ENCODE measurements at regions of chr9 and their contacts with region 1.

Region 1: GRCh38 chr9:77433675-77434445 is 214.3 kb downstream of the GNA14 start:
- DNase-seq: peak; percentile 76
- ATAC-seq: peak; percentile 93
- H3K4me3 ChIP-seq: no peak overlapping the region
- H3K27ac ChIP-seq: no peak overlapping the region
- H3K4me1 ChIP-seq: no peaks in the 10 kb centered on the region
- H3K27me3 ChIP-seq: no peaks in the 10 kb centered on the region
- CTCF ChIP-seq: peak; percentile 94

Region 2: DNA sequence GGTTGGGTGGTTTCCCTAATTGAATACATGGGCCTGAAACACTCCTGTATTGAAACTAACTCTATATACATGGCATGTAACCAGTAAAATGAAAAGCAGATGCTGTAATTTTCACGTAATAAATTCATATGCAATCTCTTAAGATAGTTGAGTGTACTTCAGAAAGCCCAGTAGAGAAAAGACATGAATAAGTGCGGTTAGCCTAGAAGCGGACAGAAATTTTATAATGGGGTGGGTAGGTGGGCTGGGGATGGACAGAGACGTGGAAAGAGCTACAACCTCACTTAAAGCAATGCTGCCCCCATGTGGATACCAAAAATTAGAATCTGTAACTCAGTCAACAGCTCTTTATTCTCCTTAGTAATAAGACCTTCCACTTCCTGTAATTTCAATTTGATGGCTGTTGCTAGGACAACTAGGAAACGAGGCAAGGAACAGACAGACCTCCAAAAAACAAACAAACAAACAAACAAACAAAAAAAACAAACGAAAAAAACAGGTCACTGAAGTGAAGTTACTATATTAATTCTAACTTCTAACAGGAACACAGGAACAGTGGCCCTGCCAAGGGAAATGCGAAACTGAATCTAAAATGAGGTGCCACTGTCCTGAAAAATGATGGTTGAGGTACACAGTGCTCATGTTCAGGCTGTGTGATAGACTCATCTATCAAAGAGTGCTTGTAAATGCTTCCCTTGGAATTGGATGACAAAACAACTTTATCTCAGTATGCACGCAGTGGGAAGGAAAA is 317.7 kb after region 1 on chr9:
- intact Hi-C with region 1: loop called (anchors 10 kb)
- DNase-seq: no peak
- ATAC-seq: peak; percentile 82
- H3K4me3 ChIP-seq: no peak overlapping the region
- H3K27ac ChIP-seq: no peak overlapping the region
- H3K4me1 ChIP-seq: peaks cover 4% of the 10 kb centered on the region
- H3K27me3 ChIP-seq: no peaks in the 10 kb centered on the region
- CTCF ChIP-seq: peak; percentile 56